ENCODE measurements at regions of chr3 and their contacts with region 1.

Region 1: GRCh38 chr3:41881233-41881821 is 80.6 kb downstream of the ULK4 start:
- DNase-seq: peak in 1 of 2 donors; percentile 79
- H3K4me3 ChIP-seq: no peak overlapping the region
- H3K27ac ChIP-seq: no peak overlapping the region
- H3K4me1 ChIP-seq: no peaks in the 10 kb centered on the region
- H3K27me3 ChIP-seq: no peaks in the 10 kb centered on the region
- CTCF ChIP-seq: peak in 5 of 7 experiments; percentile 27 to 73 (median 65)
- EP300 ChIP-seq: no peak
- POLR2A ChIP-seq: no peak

Region 2: GRCh38 chr3:40580494-40581091 is 1300.7 kb before region 1 on chr3:
- intact Hi-C with region 1: loop called (anchors 5 kb)
- DNase-seq: peak; percentile 56 to 89
- H3K4me3 ChIP-seq: no peak overlapping the region
- H3K27ac ChIP-seq: no peak overlapping the region
- H3K4me1 ChIP-seq: peaks cover 0 to 9% (median 4%) of the 10 kb centered on the region in 4 donors
- H3K27me3 ChIP-seq: no peaks in the 10 kb centered on the region
- CTCF ChIP-seq: peak in 5 of 7 experiments; percentile 73 to 90 (median 84)
- EP300 ChIP-seq: no peak
- POLR2A ChIP-seq: no peak